Common myeloid progenitor, CD34-positive (primary cell): ENCODE measurements at regions of chr12 and their contacts with region 1.

Region 1: DNA sequence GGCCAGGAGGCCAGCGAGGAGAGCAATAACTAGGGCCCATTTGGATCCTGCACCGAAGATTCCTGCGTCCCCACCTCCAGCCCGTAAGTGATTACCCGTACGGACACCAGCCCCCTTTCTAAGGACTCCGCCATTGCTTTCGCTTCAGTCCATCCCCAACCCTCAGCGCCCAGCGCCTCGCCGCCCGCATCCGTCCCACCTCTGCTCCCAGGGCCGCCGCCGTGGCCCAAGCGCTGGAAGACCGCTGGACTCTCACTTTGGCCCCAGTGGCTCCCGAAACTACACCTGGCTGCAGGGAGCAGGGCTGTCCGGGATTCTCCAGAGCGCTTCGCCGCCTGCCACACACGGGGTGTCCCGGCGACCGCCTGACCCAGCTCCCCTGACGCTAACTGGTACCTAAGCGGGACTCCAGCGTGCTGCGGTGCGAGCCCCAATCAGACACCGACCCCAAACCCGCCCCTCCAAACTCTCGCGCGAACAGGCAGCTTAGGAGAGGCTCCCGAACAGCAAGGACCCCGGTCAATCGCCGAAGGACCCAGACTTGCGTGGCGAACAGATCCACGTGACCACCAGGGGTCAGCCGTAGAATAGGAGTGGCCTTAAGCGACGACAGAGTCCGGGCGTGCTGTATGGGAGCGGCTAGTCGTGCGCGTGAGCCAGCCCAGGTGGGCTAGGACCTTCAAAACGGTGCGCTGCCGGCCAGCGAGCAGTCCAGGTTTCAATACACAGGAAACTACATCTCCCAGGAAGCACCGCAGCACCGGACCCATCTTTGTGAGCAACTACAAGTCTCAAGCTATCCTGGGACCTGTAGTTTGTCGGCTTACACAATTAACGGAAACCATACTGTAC is at the start of gene CNPY2:
- DNase-seq: peak; percentile 95 to 98 (median 97)
- H3K4me3 ChIP-seq: peak within 1 kb of the TSS; percentile 71 to 98 (median 94)
- H3K27ac ChIP-seq: peak within 1 kb of the TSS; percentile 91 to 94
- H3K4me1 ChIP-seq: peaks cover 6 to 18% (median 17%) of the 10 kb centered on the region in 4 experiments
- H3K27me3 ChIP-seq: no peaks in the 10 kb centered on the region

Region 2: DNA sequence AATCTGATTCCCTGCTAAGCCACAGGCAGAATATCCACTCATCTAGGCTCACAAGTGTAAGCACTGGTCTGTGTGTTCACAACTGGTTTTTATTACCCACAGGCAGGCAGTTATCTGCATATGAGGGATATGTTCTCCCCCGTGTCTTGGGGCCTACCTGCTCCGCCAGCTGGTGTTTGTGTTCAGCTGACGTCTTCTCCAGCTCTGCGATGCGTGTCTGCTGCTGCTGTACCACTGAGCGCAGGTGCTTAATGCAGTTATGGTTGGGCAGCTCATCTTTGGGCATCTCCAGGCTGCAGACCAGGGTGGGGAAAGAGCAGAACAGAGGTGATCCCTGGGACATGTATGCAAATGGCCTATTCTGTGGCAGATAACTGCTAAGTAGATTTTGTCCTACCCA is 107.8 kb before region 1 on chr12:
- CTCF ChIA-PET with region 1: no interaction called
- POLR2A ChIA-PET with region 1: no interaction called
- DNase-seq: peak in 1 of 3 donors; percentile 4
- H3K4me3 ChIP-seq: no peak overlapping the region
- H3K27ac ChIP-seq: no peak overlapping the region
- H3K4me1 ChIP-seq: peaks cover 0 to 22% (median 13%) of the 10 kb centered on the region in 4 experiments
- H3K27me3 ChIP-seq: no peaks in the 10 kb centered on the region

Region 3: GRCh38 chr12:56299853-56300643 is 15.8 kb before region 1 on chr12 and contains the start of gene CS:
- CTCF ChIA-PET with region 1: interaction called, 11 read pairs
- POLR2A ChIA-PET with region 1: interaction called, 11 read pairs
- DNase-seq: peak; percentile 98 to 99 (median 99)
- H3K4me3 ChIP-seq: peak within 1 kb of the TSS; percentile 52 to 95 (median 85)
- H3K27ac ChIP-seq: peak within 1 kb of the TSS; percentile 65 to 90
- H3K4me1 ChIP-seq: peaks cover 12 to 31% (median 26%) of the 10 kb centered on the region in 4 experiments
- H3K27me3 ChIP-seq: no peaks in the 10 kb centered on the region

Region 4: DNA sequence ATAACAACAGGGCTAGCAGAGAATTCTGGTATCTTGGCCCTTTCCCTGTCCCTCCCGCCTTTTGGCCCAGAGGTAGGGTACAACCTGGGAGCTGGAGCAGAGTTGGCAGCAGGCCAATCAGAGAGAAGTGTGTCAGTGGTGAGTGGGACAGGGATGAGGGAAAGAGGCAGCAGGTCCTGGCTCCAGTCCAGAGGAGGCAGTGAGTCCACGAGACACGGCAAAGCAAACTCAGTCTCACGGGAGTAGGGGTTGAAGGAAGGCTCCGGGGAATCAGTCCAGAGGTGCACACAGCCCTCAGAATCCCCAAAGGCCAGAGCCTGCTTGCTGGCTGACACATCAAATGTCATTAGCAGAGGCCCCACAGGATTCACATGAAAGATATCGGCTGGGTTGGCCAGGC is 10.7 kb after region 1 on chr12:
- CTCF ChIA-PET with region 1: interaction called, 19 read pairs
- POLR2A ChIA-PET with region 1: interaction called, 4 read pairs
- DNase-seq: no peak
- H3K4me3 ChIP-seq: no peak overlapping the region
- H3K27ac ChIP-seq: no peak overlapping the region
- H3K4me1 ChIP-seq: peaks cover 0 to 5% (median 0%) of the 10 kb centered on the region in 4 experiments
- H3K27me3 ChIP-seq: no peaks in the 10 kb centered on the region

Region 5: GRCh38 chr12:56333679-56334489 is 18.0 kb after region 1 on chr12 and contains the start of gene PAN2:
- CTCF ChIA-PET with region 1: interaction called, 5 read pairs
- POLR2A ChIA-PET with region 1: interaction called, 28 read pairs
- DNase-seq: peak; percentile 98 to 99 (median 99)
- H3K4me3 ChIP-seq: peak within 1 kb of the TSS; percentile 4 to 84 (median 72)
- H3K27ac ChIP-seq: peak within 1 kb of the TSS; percentile 99
- H3K4me1 ChIP-seq: peaks cover 9 to 30% (median 27%) of the 10 kb centered on the region in 4 experiments
- H3K27me3 ChIP-seq: no peaks in the 10 kb centered on the region

Region 6: DNA sequence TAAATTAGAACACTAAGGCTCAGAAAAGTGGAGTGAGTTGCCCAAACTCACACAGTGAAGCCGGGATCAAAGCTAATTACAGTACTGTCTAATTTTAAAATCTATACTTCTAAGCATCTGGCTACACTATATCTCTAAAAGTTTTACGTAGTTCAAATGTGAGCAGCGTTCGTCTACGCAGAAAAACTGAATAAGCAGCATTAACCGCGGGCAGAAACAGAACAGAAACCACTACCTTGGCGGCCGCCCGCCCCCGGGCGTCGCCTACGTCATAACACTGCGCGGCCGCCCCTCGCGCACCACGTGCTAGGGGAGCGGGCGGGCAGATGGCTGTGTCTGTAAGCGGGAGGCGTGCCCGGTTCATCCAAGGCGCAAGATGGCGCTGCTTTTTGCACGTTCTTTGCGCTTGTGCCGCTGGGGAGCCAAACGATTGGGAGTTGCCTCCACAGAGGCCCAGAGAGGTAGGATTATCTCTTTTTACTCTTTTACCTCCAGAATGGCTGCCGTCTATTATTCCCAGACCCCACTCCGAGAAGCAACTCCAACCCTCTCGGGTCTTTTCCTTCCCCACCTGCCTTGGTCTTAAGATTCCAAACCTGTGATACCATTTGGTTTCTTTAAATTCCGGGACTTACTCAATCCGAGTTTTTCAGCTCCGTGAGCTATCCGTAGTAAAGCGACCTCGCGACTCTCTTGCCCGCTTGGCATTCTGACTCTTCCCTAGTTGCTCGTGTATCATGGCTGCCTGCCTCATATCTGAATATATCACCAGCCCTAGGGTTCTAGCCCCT is 152.6 kb after region 1 on chr12 and contains the start of gene SPRYD4:
- CTCF ChIA-PET with region 1: interaction called, 14 read pairs
- POLR2A ChIA-PET with region 1: interaction called, 4 read pairs
- DNase-seq: peak; percentile 94 to 96 (median 96)
- H3K4me3 ChIP-seq: peak within 1 kb of the TSS; percentile 77 to 100 (median 98)
- H3K27ac ChIP-seq: peak within 1 kb of the TSS; percentile 90 to 94
- H3K4me1 ChIP-seq: peaks cover 2 to 19% (median 15%) of the 10 kb centered on the region in 4 experiments
- H3K27me3 ChIP-seq: no peaks in the 10 kb centered on the region